A549 (cell line): ENCODE measurements at regions of chr15 and their contacts with region 1.

Region 1: DNA sequence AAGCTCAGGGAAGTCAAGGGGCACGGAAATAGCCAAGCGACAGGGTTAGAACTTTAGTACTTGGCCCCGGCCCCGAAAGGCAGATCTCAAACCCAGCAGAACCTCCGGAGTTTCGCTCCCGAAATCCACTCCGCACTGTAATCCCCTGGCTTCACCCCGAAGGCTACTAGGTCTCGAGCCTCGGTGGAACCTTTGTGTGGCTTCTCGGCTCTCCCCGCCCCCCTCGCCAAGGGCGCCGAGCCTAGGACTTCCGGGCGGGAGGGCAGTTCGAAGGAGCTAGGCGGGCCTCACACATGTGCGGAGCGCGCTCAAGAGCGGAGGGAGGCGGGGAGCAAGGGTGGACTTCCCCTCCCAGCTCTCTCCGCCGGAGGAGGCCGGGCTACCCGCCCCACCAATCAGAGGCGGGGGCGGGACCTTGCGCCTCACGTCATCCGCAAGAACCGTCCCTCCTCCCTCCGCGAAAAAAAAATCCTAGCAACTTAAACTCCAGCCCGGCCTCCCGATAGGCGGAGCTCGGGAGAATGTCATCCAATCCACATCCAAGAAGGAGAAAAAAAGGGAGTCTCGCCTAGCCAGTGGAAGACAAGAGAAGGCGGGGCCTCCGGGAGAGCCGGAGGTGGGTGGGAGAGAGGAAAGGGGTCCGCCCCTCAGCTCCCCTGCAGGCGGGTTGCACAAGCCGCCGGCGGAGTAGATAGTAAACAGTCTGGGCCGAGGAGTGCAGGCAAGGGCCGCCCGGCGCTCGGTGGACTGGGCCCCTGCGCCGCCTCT is 2.4 kb upstream of the SIN3A start:
- DNase-seq: peak; percentile 99 to 100
- ATAC-seq: peak; percentile 22 to 57
- H3K4me3 ChIP-seq: peak overlapping the region; percentile 74
- H3K27ac ChIP-seq: peak overlapping the region; percentile 92
- H3K4me1 ChIP-seq: peaks cover 18% of the 10 kb centered on the region
- CTCF ChIP-seq: no peak
- EP300 ChIP-seq: no peak
- POLR2A ChIP-seq: peak; percentile 53
- RAD21 ChIP-seq: no peak; a peak in 1 of 5 replicates

Region 2: GRCh38 chr15:75468913-75469598 is 15.2 kb after region 1 on chr15:
- CTCF ChIA-PET with region 1: interaction called, 11 read pairs
- POLR2A ChIA-PET with region 1: interaction called, 9 read pairs
- DNase-seq: no peak
- ATAC-seq: no peak
- H3K4me3 ChIP-seq: no peak overlapping the region
- H3K27ac ChIP-seq: no peak overlapping the region
- H3K4me1 ChIP-seq: no peaks in the 10 kb centered on the region
- CTCF ChIP-seq: no peak
- EP300 ChIP-seq: no peak
- POLR2A ChIP-seq: no peak
- RAD21 ChIP-seq: no peak